Astrocyte of the cerebellum (primary cell): ENCODE measurements at regions of chr2 and their contacts with region 1.

Region 1: DNA sequence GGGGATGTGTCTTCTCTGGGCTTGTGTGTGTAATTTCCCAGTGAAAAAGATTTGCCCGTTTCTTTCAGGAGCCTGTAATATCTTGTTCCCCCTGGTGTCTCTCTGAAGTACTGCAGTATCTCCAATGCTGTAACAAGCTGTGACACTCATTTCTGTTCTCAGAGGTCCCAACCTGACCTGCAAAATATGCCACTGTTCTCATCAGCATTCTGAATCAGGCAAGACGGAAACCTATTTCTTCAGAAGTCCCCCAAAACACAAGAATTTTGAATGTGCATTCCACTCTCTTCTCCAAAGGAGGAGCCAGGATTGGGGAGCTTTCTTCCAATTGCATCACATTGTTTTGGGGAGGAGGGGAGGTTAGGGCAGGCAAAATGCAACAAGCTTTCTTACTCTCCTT is 77.0 kb upstream of the CNGA3 start:
- DNase-seq: peak; percentile 40
- H3K4me3 ChIP-seq: no peak overlapping the region
- CTCF ChIP-seq: peak; percentile 81

Region 2: GRCh38 chr2:98175811-98176210 is 93.5 kb before region 1 on chr2:
- in situ Hi-C with region 1: loop called (anchors 10 kb)
- DNase-seq: no peak
- H3K4me3 ChIP-seq: no peak overlapping the region
- CTCF ChIP-seq: no peak

Region 3: DNA sequence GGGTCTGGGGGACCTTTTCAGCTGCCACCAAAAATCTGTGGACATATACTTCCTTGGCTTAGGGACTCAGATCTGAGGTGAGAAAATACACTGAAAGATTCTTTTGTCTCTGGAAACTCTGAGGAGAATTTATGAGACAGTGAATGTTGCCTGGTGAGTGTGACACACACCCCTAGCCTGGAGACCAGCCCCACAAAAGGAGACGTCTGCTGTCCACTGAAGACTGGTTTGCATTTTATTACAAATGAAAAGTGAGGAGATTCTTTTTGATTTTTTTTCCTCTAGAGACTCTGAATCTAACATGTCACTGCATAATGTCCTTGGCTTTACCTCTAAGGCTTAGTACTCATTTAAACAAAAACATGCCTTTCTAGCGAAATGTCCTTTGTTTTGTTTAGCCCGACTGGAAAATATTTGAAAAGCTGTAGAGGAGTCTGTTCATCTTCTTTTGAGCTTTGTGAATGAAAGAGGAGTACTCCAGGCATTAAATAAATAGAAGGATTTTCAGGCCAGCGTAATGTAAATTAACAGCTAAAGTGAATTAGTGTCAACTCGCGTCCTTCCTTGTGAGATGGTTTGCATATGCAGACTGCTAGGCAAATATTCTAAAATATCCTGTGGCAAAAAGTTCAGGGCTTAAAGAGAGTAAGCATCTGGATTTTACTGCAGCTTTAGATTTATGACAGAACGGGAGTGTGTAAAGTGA is 57.0 kb before region 1 on chr2:
- in situ Hi-C with region 1: no loop called
- DNase-seq: no peak
- H3K4me3 ChIP-seq: no peak overlapping the region
- CTCF ChIP-seq: no peak